Vagina (tissue), 2 donors: ENCODE measurements at regions of chr10 and their contacts with region 1.

Region 1: DNA sequence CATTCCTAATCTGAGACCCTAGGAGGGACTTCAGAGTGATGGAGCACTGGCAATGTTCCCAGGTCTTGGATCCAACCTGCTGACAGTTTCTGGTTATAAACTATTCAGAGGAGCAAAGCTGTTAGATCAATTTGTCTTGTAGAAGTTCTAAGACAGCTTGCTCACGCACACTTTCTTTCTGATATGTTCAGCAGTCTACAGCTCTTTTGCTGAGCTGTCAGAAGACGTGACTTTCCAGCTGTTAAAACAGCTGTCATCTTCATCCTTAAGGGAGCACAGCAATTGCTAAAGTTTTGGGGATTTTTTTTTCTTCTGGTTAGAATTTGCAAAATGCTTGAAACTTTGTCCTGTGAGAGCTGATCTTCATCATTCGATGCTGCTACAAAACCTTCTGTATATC is 823.1 kb downstream of the SORCS1 start:
- DNase-seq: no peak
- H3K4me3 ChIP-seq: no peak overlapping the region
- H3K27ac ChIP-seq: no peak overlapping the region
- H3K4me1 ChIP-seq: no peaks in the 10 kb centered on the region
- H3K27me3 ChIP-seq: no peaks in the 10 kb centered on the region
- CTCF ChIP-seq: no peak
- POLR2A ChIP-seq: no peak

Region 2: GRCh38 chr10:105328503-105329133 is 1012.7 kb before region 1 on chr10:
- intact Hi-C with region 1: loop called (anchors 5 kb)
- DNase-seq: no peak
- H3K4me3 ChIP-seq: no peak overlapping the region
- H3K27ac ChIP-seq: no peak overlapping the region
- H3K4me1 ChIP-seq: no peaks in the 10 kb centered on the region
- H3K27me3 ChIP-seq: no peaks in the 10 kb centered on the region
- CTCF ChIP-seq: no peak
- POLR2A ChIP-seq: no peak

Region 3: GRCh38 chr10:106320078-106320477 is 21.3 kb before region 1 on chr10:
- intact Hi-C with region 1: no loop called
- DNase-seq: no peak
- H3K4me3 ChIP-seq: no peak overlapping the region
- H3K27ac ChIP-seq: no peak overlapping the region
- H3K4me1 ChIP-seq: no peaks in the 10 kb centered on the region
- H3K27me3 ChIP-seq: no peaks in the 10 kb centered on the region
- CTCF ChIP-seq: no peak
- POLR2A ChIP-seq: no peak